Activated CD4-positive, alpha-beta T cell treated with anti-CD3 and anti-CD28 coated beads for 36 hours (primary cell): ENCODE measurements at regions of chr6 and their contacts with region 1.

Region 1: DNA sequence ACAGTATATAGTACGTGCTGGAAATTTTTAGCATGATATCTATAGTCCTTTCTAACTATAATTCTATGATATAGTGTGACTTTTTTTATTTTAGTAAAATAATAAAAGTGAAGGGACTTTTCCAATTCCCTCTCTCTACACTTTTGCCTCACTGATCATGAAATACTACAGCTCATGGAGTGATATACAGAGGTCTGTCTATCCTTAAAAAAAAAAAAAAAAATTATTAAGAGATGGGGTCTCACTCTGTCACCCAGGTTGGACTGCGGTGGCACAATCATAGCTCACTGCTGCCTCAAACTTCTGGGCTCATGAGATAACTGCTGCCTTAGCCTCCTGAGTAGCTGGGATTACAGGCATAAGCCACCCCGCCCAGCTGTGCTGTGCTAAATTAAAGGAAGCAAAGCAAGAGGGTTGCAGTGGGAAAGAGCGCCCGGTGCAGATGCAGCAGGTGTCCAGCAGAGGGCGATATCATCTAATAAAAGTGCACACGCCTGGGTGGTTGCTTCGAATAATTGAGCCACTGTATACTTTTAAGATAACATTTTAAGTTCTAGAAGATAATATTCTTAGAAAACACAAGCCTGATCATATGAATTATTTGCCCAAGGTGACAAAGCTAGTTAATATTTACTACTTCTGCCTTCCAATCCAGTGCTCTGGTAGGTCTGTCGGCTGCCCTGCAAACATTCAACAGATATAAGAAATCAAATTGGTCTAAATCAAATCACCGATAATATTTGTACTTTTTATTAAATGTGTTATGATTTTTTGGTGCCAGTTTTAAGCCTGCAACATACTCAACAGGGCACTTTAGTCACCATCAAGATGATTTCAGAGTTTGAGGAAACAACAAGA is 94.9 kb upstream of the NT5E start:
- DNase-seq: peak; percentile 77
- ATAC-seq: peak; percentile 78
- H3K4me3 Mint-ChIP-seq: no peak overlapping the region
- H3K27ac Mint-ChIP-seq: no peak overlapping the region
- H3K4me1 Mint-ChIP-seq: no peaks in the 10 kb centered on the region
- H3K27me3 Mint-ChIP-seq: peaks cover 10% of the 10 kb centered on the region

Region 2: GRCh38 chr6:85323435-85324040 is 31.5 kb before region 1 on chr6:
- CTCF ChIA-PET with region 1: no interaction called
- POLR2A ChIA-PET with region 1: no interaction called
- intact Hi-C with region 1: no loop called
- DNase-seq: peak; percentile 88
- ATAC-seq: peak; percentile 53
- H3K4me3 Mint-ChIP-seq: no peak overlapping the region
- H3K27ac Mint-ChIP-seq: no peak overlapping the region
- H3K4me1 Mint-ChIP-seq: no peaks in the 10 kb centered on the region
- H3K27me3 Mint-ChIP-seq: peaks cover 8% of the 10 kb centered on the region

Region 3: GRCh38 chr6:85498596-85499258 is 143.7 kb after region 1 on chr6:
- CTCF ChIA-PET with region 1: interaction called, 10 read pairs
- POLR2A ChIA-PET with region 1: no interaction called
- intact Hi-C with region 1: no loop called
- DNase-seq: no peak
- ATAC-seq: peak; percentile 54
- H3K4me3 Mint-ChIP-seq: no peak overlapping the region
- H3K27ac Mint-ChIP-seq: no peak overlapping the region
- H3K4me1 Mint-ChIP-seq: peaks cover 18% of the 10 kb centered on the region
- H3K27me3 Mint-ChIP-seq: no peaks in the 10 kb centered on the region

Region 4: GRCh38 chr6:85537055-85537494 is 182.1 kb after region 1 on chr6:
- CTCF ChIA-PET with region 1: interaction called, 8 read pairs
- POLR2A ChIA-PET with region 1: no interaction called
- intact Hi-C with region 1: loop called (anchors 1 kb)
- DNase-seq: no peak
- ATAC-seq: no peak
- H3K4me3 Mint-ChIP-seq: no peak overlapping the region
- H3K27ac Mint-ChIP-seq: no peak overlapping the region
- H3K4me1 Mint-ChIP-seq: peaks cover 2% of the 10 kb centered on the region
- H3K27me3 Mint-ChIP-seq: no peaks in the 10 kb centered on the region

Region 5: GRCh38 chr6:85593438-85594196 is 238.6 kb after region 1 on chr6 and contains the start of gene SNX14:
- CTCF ChIA-PET with region 1: no interaction called
- POLR2A ChIA-PET with region 1: no interaction called
- intact Hi-C with region 1: loop called in 1 of 2 experiments (anchors 5 kb)
- DNase-seq: peak; percentile 87
- ATAC-seq: peak; percentile 81
- H3K4me3 Mint-ChIP-seq: peak within 1 kb of the TSS; percentile 83
- H3K27ac Mint-ChIP-seq: peak within 1 kb of the TSS; percentile 90
- H3K4me1 Mint-ChIP-seq: peaks cover 28% of the 10 kb centered on the region
- H3K27me3 Mint-ChIP-seq: no peaks in the 10 kb centered on the region
- total RNA-seq, gene SNX14: 38.4 to 54.7 TPM

Region 6: DNA sequence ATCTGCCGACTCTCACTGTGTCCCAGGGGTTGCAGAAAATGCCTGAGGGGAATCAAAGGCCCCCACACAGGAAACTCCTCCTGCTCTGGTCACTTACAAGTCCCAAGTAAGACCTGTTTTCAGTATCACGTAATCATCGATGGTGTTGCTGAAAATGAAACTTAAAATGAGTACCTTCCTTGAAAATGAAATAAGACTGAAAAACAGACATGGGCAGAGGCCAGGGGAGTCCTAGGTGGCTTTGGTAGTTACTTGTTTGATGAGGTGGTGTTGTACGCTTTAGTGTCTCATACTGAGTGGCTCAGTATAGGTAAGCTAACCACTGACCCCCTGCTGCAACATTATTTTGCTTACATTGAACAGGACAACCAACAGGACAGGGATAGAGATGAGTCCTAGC is 330.7 kb after region 1 on chr6:
- CTCF ChIA-PET with region 1: no interaction called
- POLR2A ChIA-PET with region 1: no interaction called
- intact Hi-C with region 1: no loop called
- DNase-seq: no peak
- ATAC-seq: peak; percentile 19
- H3K4me3 Mint-ChIP-seq: no peak overlapping the region
- H3K27ac Mint-ChIP-seq: no peak overlapping the region
- H3K4me1 Mint-ChIP-seq: no peaks in the 10 kb centered on the region
- H3K27me3 Mint-ChIP-seq: no peaks in the 10 kb centered on the region